ENCODE measurements at regions of chr5 and their contacts with region 1.

Region 1: DNA sequence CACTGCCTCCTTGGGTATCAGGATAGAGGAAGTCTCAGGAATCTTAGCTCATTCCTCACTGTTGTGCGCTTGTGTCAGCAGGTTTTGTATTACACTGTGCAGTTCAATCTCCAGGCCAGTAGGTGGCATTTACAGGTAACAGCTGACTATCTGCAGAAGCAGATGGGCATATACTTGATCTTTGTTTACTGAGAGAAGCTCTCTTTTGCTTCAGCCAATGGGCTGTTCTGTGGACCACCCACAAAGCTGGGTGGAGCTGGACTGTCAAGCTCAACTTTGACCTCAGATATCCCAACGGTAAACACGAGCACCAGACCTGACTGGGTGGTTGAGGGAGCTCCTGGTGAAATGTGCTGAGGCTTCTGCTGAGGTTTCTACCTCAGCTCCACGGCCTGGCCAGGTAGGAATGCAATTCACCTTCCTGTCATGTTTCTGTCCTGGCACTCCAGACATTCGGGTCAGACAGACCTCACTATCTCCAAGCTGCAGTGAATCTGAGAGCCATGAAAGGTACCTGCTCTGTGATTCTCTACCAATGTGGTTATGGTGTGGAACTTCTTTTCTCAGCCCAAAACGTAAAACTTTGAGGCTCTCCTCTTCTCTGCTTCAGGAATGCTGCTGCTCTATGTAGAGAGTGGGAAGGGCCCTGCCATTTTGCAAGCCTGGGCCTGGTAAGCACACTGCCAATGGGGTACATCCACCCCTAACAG is 167.9 kb upstream of the ACTBL2 start:
- DNase-seq: no peak
- ATAC-seq: peak in 4 of 8 donors; percentile 37 to 58 (median 52)
- H3K4me3 ChIP-seq: no peak overlapping the region
- H3K27ac ChIP-seq: no peak overlapping the region
- H3K4me1 ChIP-seq: peaks cover 0 to 13% (median 0%) of the 10 kb centered on the region in 9 donors
- H3K27me3 ChIP-seq: no peaks in the 10 kb centered on the region
- CTCF ChIP-seq: peak; percentile 30 to 66 (median 57)

Region 2: GRCh38 chr5:58002318-58002717 is 351.8 kb after region 1 on chr5:
- intact Hi-C with region 1: no loop called
- DNase-seq: no peak
- ATAC-seq: no peak
- H3K4me3 ChIP-seq: no peak overlapping the region
- H3K27ac ChIP-seq: no peak overlapping the region
- H3K4me1 ChIP-seq: no peaks in the 10 kb centered on the region
- H3K27me3 ChIP-seq: no peaks in the 10 kb centered on the region
- CTCF ChIP-seq: no peak

Region 3: GRCh38 chr5:58466939-58467338 is 816.4 kb after region 1 on chr5:
- intact Hi-C with region 1: loop called in 7 of 10 experiments (anchors 5 to 10 kb)
- DNase-seq: no peak
- ATAC-seq: peak in 2 of 8 donors; percentile 28 to 38
- H3K4me3 ChIP-seq: no peak overlapping the region
- H3K27ac ChIP-seq: no peak overlapping the region
- H3K4me1 ChIP-seq: peaks cover 0 to 6% (median 5%) of the 10 kb centered on the region in 9 donors
- H3K27me3 ChIP-seq: no peaks in the 10 kb centered on the region
- CTCF ChIP-seq: no peak